ENCODE measurements at regions of chr1 and their contacts with region 1.

Region 1: GRCh38 chr1:5992026-5992813 is at the start of gene NPHP4:
- DNase-seq: peak; percentile 99 to 100
- H3K4me3 ChIP-seq: peak within 1 kb of the TSS; percentile 76 to 93 (median 84)
- H3K27ac ChIP-seq: peak within 1 kb of the TSS; percentile 83; the same call in 1 of the 2 replicates
- H3K4me1 ChIP-seq: peaks cover 5 to 20% (median 11%) of the 10 kb centered on the region in 4 experiments
- H3K27me3 ChIP-seq: peaks cover 0 to 36% (median 21%) of the 10 kb centered on the region in 4 experiments; a peak in 5 of 7 replicates
- CTCF ChIP-seq: no peak
- EP300 ChIP-seq: peak in 1 of 2 experiments; percentile 90; a peak in 2 of 3 replicates
- POLR2A ChIP-seq: no peak
- RAD21 ChIP-seq: no peak
- total RNA-seq, gene NPHP4: 13.6 and 14.0 TPM in 2 replicates

Region 2: DNA sequence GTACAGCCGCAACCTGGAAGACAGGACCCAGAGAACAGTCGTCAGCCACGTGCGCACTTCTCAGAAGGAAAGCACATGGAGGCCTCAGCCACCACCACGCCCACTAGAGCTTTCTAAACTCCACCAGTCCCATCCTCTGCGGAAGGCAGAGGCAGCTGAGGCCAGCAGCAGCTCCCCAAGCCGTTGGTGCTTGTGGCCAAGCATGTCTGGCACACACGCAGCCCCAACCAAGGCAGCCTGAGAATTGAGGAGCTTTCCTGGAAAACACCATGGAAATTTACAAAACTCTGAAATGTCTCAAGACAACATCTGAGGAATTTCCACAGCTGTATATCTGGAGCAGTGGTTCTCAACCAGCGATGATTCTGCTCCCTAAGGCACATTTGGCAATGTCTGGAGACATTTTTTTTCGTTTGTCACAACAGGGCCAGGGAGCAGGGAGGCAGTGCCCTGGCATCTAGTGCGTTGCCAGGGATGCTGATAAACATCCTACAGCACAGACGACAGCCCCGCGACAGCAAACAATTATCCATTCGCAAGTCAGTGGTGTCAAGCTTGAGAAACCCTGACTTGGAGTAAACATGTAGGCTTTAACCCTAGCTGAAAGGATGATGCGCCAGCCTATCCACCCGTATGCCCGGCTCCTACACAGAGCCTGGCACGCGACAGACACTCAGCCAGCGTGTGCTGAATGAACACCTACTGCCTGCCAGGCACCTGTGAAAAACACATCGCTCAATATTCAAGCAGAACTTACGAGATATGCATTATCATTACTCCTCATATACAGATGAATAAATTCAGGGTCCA is 24.7 kb before region 1 on chr1:
- CTCF ChIA-PET with region 1: no interaction called
- POLR2A ChIA-PET with region 1: no interaction called
- DNase-seq: no peak
- H3K4me3 ChIP-seq: no peak overlapping the region
- H3K27ac ChIP-seq: no peak overlapping the region
- H3K4me1 ChIP-seq: peaks cover 0 to 1% (median 0%) of the 10 kb centered on the region in 4 experiments; a peak in 1 of 7 replicates
- H3K27me3 ChIP-seq: no peaks in the 10 kb centered on the region
- CTCF ChIP-seq: no peak
- EP300 ChIP-seq: no peak
- POLR2A ChIP-seq: no peak
- RAD21 ChIP-seq: no peak

Region 3: DNA sequence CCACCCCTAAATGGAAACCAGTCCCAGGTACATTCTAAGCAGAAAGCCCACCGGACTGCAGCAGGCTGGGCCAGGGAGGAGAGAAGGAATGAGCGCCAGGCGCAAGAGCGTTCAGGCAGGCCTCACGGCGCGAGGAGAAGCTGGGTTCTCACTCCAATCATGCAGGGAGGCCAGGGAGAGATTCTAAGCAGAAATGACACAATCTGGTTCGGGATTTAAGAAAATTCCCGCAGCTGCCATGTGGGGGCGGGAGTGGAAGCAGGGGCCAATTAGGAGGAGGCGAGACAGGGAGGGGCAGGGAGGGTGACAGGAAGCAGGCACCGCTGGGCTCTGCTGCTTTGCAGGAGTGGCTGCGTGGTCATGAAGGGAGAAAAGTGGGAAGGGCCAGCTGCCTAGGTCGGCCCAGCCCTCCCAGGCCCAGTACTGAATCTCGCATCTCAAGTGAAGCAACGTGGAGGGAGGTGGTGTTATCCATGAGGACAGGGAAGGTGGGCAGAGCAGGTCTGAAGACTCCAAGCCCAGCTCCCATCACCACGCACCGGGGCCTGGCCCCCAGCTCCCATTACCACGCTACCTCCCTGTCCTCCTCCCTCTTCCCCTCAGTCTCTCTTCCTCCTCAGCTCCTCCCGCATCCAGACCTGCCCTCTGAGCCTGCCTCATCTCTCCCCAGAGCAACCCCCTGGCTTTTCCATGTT is 11.8 kb before region 1 on chr1:
- CTCF ChIA-PET with region 1: interaction called, 13 read pairs
- POLR2A ChIA-PET with region 1: interaction called, 12 read pairs
- DNase-seq: peak; percentile 66 to 87
- H3K4me3 ChIP-seq: peak overlapping the region in 1 of 4 experiments; percentile 45; a peak in 3 of 8 replicates
- H3K27ac ChIP-seq: no peak overlapping the region; the same call in 1 of the 2 replicates
- H3K4me1 ChIP-seq: peaks cover 6 to 13% (median 9%) of the 10 kb centered on the region in 4 experiments
- H3K27me3 ChIP-seq: no peaks in the 10 kb centered on the region
- CTCF ChIP-seq: peak; percentile 50 to 65 (median 53)
- EP300 ChIP-seq: no peak
- POLR2A ChIP-seq: peak in 1 of 2 experiments; percentile 73; a peak in 2 of 3 replicates
- RAD21 ChIP-seq: peak in 1 of 2 experiments; percentile 24; a peak in 1 of 4 replicates

Region 4: DNA sequence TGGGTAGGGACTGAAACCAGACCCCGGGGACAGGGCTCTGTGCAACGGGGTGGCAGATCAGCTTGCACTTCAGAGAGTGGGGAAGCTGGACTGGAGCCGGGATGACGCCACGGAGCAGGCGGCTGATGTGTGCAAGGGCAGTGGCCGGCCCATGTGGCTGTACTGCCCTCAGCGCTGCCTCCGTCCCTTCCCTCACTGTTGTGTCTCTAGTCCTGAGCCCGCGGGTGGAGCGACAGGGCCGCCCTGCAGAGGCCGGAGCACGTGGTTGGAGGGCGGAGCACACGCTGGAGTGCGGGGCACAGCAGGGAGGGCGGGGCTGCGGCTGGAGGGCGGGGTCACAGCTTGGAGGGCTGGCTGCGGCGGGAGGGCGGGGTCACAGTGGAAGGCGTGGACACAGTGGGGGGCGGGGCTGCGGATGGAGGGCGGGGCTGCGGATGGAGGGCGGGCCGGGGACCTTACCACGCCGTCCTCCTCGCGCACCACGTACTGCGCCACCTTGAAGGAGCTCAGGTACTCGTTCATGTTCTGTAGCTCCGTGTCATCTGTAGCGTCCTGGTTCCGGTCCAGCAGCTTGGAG is 135.5 kb after region 1 on chr1:
- CTCF ChIA-PET with region 1: no interaction called
- POLR2A ChIA-PET with region 1: no interaction called
- DNase-seq: peak; percentile 71 to 92
- H3K4me3 ChIP-seq: peak overlapping the region in 2 of 4 experiments; percentile 6 to 47; a peak in 3 of 8 replicates
- H3K27ac ChIP-seq: no peak overlapping the region
- H3K4me1 ChIP-seq: peaks cover 0 to 9% (median 4%) of the 10 kb centered on the region in 4 experiments; a peak in 4 of 7 replicates
- H3K27me3 ChIP-seq: peaks cover 0 to 16% (median 12%) of the 10 kb centered on the region in 4 experiments; a peak in 6 of 7 replicates
- CTCF ChIP-seq: no peak
- EP300 ChIP-seq: no peak
- POLR2A ChIP-seq: no peak
- RAD21 ChIP-seq: no peak